Heart left ventricle (tissue), 16 donors: ENCODE measurements at regions of chr4 and their contacts with region 1.

Region 1: GRCh38 chr4:1346781-1347409 is at the start of gene UVSSA:
- DNase-seq: peak; percentile 100
- ATAC-seq: peak; percentile 95 to 99 (median 97)
- H3K4me3 ChIP-seq: peak within 1 kb of the TSS; percentile 80 to 98 (median 90)
- H3K27ac ChIP-seq: peak within 1 kb of the TSS; percentile 95 to 100 (median 98)
- H3K4me1 ChIP-seq: peaks cover 0 to 30% (median 20%) of the 10 kb centered on the region in 12 donors
- H3K27me3 ChIP-seq: no peaks in the 10 kb centered on the region
- CTCF ChIP-seq: peak in 1 of 12 donors; percentile 24
- POLR2A ChIP-seq: peak; percentile 77 to 95
- total RNA-seq, gene UVSSA: 5.0 to 14.2 (median 6.7) TPM

Region 2: DNA sequence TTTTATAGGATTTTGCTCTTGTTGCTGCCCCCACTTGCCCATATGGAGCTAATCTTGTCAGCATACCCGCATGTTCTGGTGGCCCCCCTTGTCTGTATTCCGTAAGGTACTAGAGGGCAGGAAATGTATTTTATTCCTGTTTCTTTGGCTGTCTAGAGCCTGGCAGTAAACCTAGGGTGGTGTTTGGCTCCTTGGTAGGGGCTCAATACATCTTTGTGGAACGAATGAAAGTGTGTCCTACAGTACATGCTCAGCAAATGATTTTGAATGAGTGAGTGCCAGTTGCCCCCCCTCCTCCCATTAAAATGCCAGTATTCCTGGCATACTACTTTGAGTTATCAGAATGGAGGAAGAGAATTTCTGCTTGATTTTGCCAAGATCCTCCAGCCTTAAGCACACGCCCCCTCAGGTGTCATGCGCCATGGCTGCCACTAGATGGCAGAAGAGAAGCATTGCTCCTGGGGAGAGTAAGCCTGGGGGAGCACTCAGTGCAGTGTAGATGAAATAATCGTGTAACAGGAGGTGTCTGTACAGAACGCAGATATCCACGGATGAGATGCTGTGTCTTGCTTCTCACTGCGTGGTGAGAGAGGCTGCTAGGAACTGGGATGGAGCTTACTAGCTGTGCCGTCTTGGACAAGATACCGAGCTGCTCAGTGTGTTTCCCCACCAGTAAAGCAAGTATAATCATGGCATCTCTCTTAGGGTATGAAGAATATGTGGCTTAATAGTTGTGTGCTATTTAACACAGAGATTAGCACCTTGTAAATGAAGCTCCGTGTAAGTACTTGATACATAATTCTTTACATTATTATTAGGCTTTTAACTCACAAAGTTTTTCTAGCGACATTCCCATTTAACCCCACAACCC is 216.3 kb before region 1 on chr4:
- intact Hi-C with region 1: loop called (anchors 2 to 10 kb)
- DNase-seq: peak in 4 of 5 donors; percentile 51 to 66 (median 56)
- ATAC-seq: peak; percentile 83 to 97 (median 94)
- H3K4me3 ChIP-seq: no peak overlapping the region
- H3K27ac ChIP-seq: no peak overlapping the region
- H3K4me1 ChIP-seq: peaks cover 0 to 3% (median 0%) of the 10 kb centered on the region in 12 donors
- H3K27me3 ChIP-seq: peaks cover 0 to 4% (median 0%) of the 10 kb centered on the region in 9 donors
- CTCF ChIP-seq: peak; percentile 98 to 100 (median 99)
- POLR2A ChIP-seq: no peak

Region 3: GRCh38 chr4:1249148-1249730 is 97.7 kb before region 1 on chr4:
- intact Hi-C with region 1: loop called (anchors 1 to 5 kb)
- DNase-seq: peak; percentile 89 to 93 (median 91)
- ATAC-seq: peak; percentile 25 to 69 (median 68)
- H3K4me3 ChIP-seq: peak overlapping the region; percentile 39 to 94 (median 78)
- H3K27ac ChIP-seq: peak overlapping the region; percentile 91 to 100 (median 98)
- H3K4me1 ChIP-seq: peaks cover 7 to 54% (median 49%) of the 10 kb centered on the region in 12 donors
- H3K27me3 ChIP-seq: no peaks in the 10 kb centered on the region
- CTCF ChIP-seq: peak in 1 of 12 donors; percentile 13
- POLR2A ChIP-seq: peak in 1 of 2 donors; percentile 63

Region 4: GRCh38 chr4:1289207-1290164 is 57.4 kb before region 1 on chr4 and contains the start of gene MAEA:
- intact Hi-C with region 1: loop called in 6 of 10 experiments (anchors 2 to 5 kb)
- DNase-seq: peak; percentile 98 to 99 (median 98)
- ATAC-seq: peak; percentile 97 to 98 (median 98)
- H3K4me3 ChIP-seq: peak within 1 kb of the TSS; percentile 81 to 99 (median 96)
- H3K27ac ChIP-seq: peak within 1 kb of the TSS; percentile 75 to 96 (median 90)
- H3K4me1 ChIP-seq: peaks cover 10 to 50% (median 45%) of the 10 kb centered on the region in 12 donors
- H3K27me3 ChIP-seq: no peaks in the 10 kb centered on the region
- CTCF ChIP-seq: peak in 1 of 12 donors; percentile 6
- POLR2A ChIP-seq: peak in 1 of 2 donors; percentile 90
- total RNA-seq, gene MAEA: 41.5 to 57.2 (median 45.1) TPM

Region 5: GRCh38 chr4:1309261-1310010 is 37.5 kb before region 1 on chr4:
- intact Hi-C with region 1: loop called in 1 of 10 experiments (anchors 2 kb)
- DNase-seq: peak; percentile 88 to 92 (median 91)
- ATAC-seq: peak; percentile 95 to 98 (median 96)
- H3K4me3 ChIP-seq: peak overlapping the region in 11 of 12 donors; percentile 17 to 60 (median 46)
- H3K27ac ChIP-seq: peak overlapping the region in 11 of 12 donors; percentile 1 to 78 (median 59)
- H3K4me1 ChIP-seq: peaks cover 0 to 41% (median 35%) of the 10 kb centered on the region in 12 donors
- H3K27me3 ChIP-seq: no peaks in the 10 kb centered on the region
- CTCF ChIP-seq: peak in 1 of 12 donors; percentile 16
- POLR2A ChIP-seq: peak in 1 of 2 donors; percentile 19

Region 6: DNA sequence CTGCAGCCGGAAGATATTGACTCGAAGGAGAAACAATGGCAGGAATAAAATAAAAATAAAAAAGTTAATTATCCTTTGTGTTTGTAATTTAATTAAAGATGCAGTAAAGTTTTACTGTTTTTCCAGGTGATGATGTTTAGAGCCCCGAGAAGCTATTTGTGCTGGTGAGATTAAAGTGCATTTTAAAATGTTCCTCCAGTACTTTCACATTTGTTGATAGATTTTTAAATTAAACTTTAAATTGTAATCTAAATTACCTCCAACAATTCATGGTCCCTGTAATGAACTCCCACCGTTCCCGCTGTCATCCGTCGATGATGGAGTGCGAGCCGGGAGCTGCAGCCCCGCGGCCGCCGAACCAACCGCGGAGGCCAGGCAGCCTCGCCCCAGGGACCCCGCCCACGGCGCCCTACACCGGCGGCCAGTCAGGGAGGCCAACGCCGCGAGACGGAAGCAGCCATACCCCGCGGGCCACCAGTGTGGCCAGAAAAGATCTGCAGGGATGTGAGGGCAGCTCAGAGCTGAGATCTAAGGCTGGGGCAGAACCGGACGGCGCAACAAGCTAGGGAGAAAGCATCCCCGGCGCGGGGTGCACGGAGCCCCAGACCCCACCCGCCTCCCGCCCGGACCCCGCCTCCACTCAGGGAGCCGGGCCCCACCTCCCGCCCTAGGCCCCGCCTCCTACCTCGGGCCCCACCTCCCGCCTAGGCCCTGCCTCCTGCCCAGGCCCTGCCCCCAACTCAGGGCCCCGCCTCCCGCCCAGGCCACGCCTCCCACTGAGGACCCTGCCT is 233.2 kb after region 1 on chr4:
- intact Hi-C with region 1: loop called in 1 of 10 experiments (anchors 5 kb)
- DNase-seq: peak; percentile 85 to 95 (median 90)
- ATAC-seq: peak; percentile 66 to 91 (median 90)
- H3K4me3 ChIP-seq: peak overlapping the region; percentile 39 to 77 (median 64)
- H3K27ac ChIP-seq: peak overlapping the region in 11 of 12 donors; percentile 72 to 92 (median 86)
- H3K4me1 ChIP-seq: peaks cover 0 to 28% (median 10%) of the 10 kb centered on the region in 12 donors
- H3K27me3 ChIP-seq: peaks cover 0 to 6% (median 0%) of the 10 kb centered on the region in 9 donors
- CTCF ChIP-seq: peak in 1 of 12 donors; percentile 4
- POLR2A ChIP-seq: peak in 1 of 2 donors; percentile 52

Region 7: GRCh38 chr4:1712216-1713002 is 365.5 kb after region 1 on chr4 and contains the start of gene SLBP:
- intact Hi-C with region 1: loop called in 2 of 10 experiments (anchors 5 kb)
- DNase-seq: peak; percentile 94 to 98 (median 96)
- ATAC-seq: peak; percentile 91 to 93 (median 92)
- H3K4me3 ChIP-seq: peak within 1 kb of the TSS; percentile 81 to 97 (median 88)
- H3K27ac ChIP-seq: peak within 1 kb of the TSS; percentile 98 to 100 (median 99)
- H3K4me1 ChIP-seq: peaks cover 0 to 60% (median 39%) of the 10 kb centered on the region in 12 donors
- H3K27me3 ChIP-seq: no peaks in the 10 kb centered on the region
- CTCF ChIP-seq: no peak
- POLR2A ChIP-seq: peak; percentile 5 to 87
- total RNA-seq, gene SLBP: 10.2 to 27.7 (median 11.7) TPM